ENCODE measurements at regions of chr10 and their contacts with region 1.

Region 1: DNA sequence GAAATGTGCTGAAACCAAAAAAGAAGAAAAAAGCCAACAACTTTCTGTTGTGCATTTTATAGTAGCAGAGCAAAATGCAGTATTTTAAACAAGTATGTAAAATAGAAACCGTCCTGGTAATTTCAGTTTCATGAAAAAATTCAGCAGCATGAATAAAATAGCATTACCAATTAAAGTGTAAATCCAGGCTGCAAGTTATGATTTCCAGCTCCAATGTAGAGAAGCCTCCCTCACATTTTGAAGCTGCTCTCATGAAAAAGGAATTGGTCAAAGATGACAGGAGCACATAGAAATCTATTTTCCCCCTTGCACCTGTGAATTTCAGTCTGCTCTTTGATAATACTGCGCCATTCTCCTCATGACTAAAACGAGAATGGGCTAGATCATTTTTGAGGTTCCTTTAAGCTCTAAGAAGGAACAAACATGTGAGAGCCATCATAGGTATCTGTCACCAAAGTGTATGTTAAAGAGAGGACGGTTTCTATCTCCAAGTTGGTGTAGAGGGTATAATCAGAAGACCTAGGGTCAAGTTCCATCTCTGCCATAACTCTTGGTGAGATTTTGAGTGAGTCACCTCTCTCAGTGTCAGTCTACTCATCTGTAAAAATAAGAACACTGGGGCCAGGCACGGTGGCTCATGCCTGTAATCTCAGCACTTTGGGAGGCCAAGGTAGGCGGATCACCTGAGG is 107.5 kb downstream of the MTPAP start:
- DNase-seq: no peak
- H3K4me3 ChIP-seq: no peak overlapping the region
- H3K27ac ChIP-seq: no peak overlapping the region
- H3K4me1 ChIP-seq: peaks cover 2% of the 10 kb centered on the region
- H3K27me3 ChIP-seq: no peaks in the 10 kb centered on the region
- CTCF ChIP-seq: no peak
- POLR2A ChIP-seq: no peak

Region 2: DNA sequence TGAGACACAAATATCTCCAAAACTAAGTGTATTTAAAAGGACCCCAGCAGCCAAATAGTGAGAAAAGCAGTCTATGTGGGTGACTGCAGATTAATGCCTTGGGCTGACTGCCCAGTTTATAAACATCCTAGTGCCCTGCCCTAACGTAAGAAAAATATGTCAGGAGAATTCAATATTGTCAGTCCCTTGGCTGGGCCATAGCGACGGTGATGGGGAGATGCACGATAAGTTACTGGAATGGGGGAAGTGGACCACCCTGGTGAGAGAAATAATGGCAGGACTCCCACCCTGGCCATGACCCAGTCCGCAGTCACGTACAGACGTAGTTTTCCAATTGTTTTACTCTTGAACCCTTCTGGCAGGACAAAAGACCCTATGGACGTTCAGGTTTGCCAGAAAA is 230.2 kb before region 1 on chr10:
- CTCF ChIA-PET with region 1: interaction called, 15 read pairs
- POLR2A ChIA-PET with region 1: no interaction called
- dilution Hi-C with region 1: no loop called
- intact Hi-C with region 1: no loop called
- DNase-seq: no peak
- H3K4me3 ChIP-seq: no peak overlapping the region
- H3K27ac ChIP-seq: no peak overlapping the region
- H3K4me1 ChIP-seq: peaks cover 12% of the 10 kb centered on the region
- H3K27me3 ChIP-seq: no peaks in the 10 kb centered on the region
- CTCF ChIP-seq: no peak
- POLR2A ChIP-seq: no peak

Region 3: DNA sequence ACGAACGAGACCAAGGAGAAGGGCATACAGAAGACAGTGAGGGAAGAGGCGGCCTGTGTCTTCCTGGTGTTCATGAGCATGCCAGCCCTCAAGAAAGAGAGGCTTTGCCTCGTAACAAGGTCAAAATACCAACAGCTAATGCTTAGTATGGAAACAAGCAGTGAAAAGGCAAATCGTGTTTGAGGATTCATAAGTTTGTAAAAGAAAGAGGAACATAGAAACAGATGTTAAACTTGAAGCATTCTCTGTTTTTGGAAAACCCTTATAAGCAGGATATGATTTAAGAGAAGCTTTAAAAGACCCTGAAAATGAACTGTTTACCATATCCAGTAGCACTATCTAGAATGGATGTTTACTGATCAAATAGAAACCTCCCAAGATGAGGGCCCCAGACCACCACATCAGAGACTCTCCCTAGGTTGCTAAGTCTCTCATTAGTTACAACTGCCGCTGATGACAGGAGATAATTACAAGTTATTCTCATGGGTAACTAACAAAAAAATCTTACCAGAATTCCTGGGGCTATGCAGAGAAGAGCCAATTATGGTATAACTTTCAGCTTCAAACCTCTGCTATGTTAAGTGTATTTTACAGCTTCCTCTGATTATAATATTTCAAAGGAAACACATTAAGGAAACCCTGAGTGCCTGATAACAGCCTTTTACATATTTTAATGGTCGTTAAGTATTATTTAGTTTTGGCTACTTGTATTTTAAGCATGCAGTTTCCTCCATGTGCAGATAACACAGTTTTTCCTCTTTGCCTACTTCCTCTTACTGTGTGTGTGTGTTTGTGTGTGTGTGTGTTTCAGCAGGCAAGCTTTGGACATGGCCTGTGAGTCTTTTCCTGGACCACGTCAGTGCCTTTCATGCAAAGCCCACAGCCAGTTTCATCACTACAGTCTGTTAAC is 200.1 kb before region 1 on chr10:
- CTCF ChIA-PET with region 1: interaction called, 36 read pairs
- POLR2A ChIA-PET with region 1: no interaction called
- dilution Hi-C with region 1: no loop called
- intact Hi-C with region 1: loop called (anchors 5 kb)
- DNase-seq: peak; percentile 96
- H3K4me3 ChIP-seq: no peak overlapping the region
- H3K27ac ChIP-seq: peak overlapping the region; percentile 81
- H3K4me1 ChIP-seq: peaks cover 50% of the 10 kb centered on the region
- H3K27me3 ChIP-seq: no peaks in the 10 kb centered on the region
- CTCF ChIP-seq: no peak
- POLR2A ChIP-seq: peak; percentile 52

Region 4: GRCh38 chr10:30098613-30099012 is 143.0 kb before region 1 on chr10:
- CTCF ChIA-PET with region 1: interaction called, 21 read pairs
- POLR2A ChIA-PET with region 1: no interaction called
- dilution Hi-C with region 1: no loop called
- intact Hi-C with region 1: no loop called
- DNase-seq: peak; percentile 49
- H3K4me3 ChIP-seq: no peak overlapping the region
- H3K27ac ChIP-seq: no peak overlapping the region
- H3K4me1 ChIP-seq: peaks cover 8% of the 10 kb centered on the region
- H3K27me3 ChIP-seq: peaks cover 0 to 2% of the 10 kb centered on the region in 2 experiments
- CTCF ChIP-seq: no peak
- POLR2A ChIP-seq: no peak

Region 5: GRCh38 chr10:30155401-30155800 is 86.2 kb before region 1 on chr10:
- CTCF ChIA-PET with region 1: interaction called, 15 read pairs
- POLR2A ChIA-PET with region 1: interaction called, 3 read pairs
- dilution Hi-C with region 1: no loop called
- intact Hi-C with region 1: no loop called
- DNase-seq: peak; percentile 77
- H3K4me3 ChIP-seq: no peak overlapping the region
- H3K27ac ChIP-seq: peak overlapping the region; percentile 60
- H3K4me1 ChIP-seq: peaks cover 16% of the 10 kb centered on the region
- H3K27me3 ChIP-seq: no peaks in the 10 kb centered on the region
- CTCF ChIP-seq: no peak
- POLR2A ChIP-seq: no peak

Region 6: DNA sequence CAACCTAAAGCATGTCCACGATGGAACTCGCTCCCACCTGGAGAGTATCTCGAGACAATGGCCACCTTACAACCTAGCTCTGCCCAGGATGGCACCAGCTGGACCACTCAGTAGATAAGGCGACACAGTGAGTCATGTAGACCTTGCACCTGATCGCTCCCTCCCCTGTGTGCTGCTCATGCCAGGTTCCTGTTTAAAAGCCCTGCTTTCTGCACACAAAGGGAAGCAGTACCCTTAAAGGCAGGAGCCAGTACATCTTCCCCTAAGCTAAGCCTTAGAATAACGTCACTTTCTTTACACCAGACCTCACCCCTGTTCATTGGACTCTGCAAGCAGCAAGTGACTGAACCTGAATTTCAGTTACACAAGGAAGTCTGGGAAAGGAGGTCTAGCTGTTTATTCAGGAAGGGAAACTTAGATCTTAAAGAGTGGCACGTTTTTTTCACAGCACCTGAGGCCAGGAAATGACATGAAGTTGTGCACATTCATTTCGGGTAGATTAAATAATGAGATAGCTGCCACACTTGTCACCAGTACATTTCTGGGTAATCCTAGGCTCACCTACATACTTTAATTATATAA is 10.4 kb before region 1 on chr10:
- CTCF ChIA-PET with region 1: interaction called, 34 read pairs
- POLR2A ChIA-PET with region 1: no interaction called
- dilution Hi-C with region 1: no loop called
- intact Hi-C with region 1: no loop called
- DNase-seq: no peak
- H3K4me3 ChIP-seq: no peak overlapping the region
- H3K27ac ChIP-seq: no peak overlapping the region
- H3K4me1 ChIP-seq: peaks cover 3% of the 10 kb centered on the region
- H3K27me3 ChIP-seq: peaks cover 0 to 2% of the 10 kb centered on the region in 2 experiments
- CTCF ChIP-seq: no peak
- POLR2A ChIP-seq: no peak

Region 7: DNA sequence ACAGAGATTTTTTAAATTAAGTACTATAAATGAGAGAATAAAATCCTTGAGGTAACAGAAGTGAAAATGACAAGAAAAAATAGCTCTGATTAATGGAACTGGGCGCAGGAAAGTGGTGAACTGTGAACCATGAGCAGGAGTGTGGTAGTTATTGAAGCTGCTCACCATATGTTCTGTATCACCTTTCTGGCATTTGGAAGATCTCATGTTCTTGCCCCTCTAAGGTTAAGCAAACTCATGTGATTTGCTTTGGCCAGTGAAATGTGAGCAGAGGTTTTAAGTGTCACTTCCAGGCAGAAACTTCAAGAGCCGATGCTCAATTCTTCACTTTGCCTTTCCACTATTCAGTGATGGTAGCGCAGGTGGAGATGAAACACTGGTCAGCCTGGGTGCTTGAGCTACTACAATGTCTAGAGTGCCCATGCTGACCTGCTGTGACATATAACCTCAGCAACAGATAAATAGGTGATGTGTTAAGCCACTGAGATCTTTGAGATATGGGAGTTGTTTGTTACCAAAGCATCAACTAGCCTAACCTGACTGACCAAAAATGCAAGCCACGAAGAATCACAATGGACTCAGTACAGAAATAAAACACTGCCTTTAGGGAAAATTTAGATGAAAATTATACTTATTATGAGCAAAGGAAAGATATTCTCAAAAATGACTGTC is 89.1 kb after region 1 on chr10:
- CTCF ChIA-PET with region 1: no interaction called
- POLR2A ChIA-PET with region 1: no interaction called
- dilution Hi-C with region 1: no loop called
- intact Hi-C with region 1: no loop called
- DNase-seq: no peak
- H3K4me3 ChIP-seq: no peak overlapping the region
- H3K27ac ChIP-seq: no peak overlapping the region
- H3K4me1 ChIP-seq: no peaks in the 10 kb centered on the region
- H3K27me3 ChIP-seq: no peaks in the 10 kb centered on the region
- CTCF ChIP-seq: no peak
- POLR2A ChIP-seq: no peak

Measured in endothelial cell of umbilical vein (primary cell).